ENCODE measurements at regions of chr6 and their contacts with region 1.

Region 1: GRCh38 chr6:110201151-110201884 is 21.1 kb downstream of the CDC40 start:
- DNase-seq: no peak
- ATAC-seq: no peak
- H3K4me3 ChIP-seq: no peak overlapping the region
- H3K4me3 Mint-ChIP-seq: no peak overlapping the region
- H3K27ac ChIP-seq: no peak overlapping the region
- H3K27ac Mint-ChIP-seq: no peak overlapping the region
- H3K4me1 ChIP-seq: no peaks in the 10 kb centered on the region
- H3K4me1 Mint-ChIP-seq: peaks cover 3 to 48% (median 32%) of the 10 kb centered on the region in 7 donors
- H3K27me3 ChIP-seq: no peaks in the 10 kb centered on the region
- H3K27me3 Mint-ChIP-seq: no peaks in the 10 kb centered on the region

Region 2: DNA sequence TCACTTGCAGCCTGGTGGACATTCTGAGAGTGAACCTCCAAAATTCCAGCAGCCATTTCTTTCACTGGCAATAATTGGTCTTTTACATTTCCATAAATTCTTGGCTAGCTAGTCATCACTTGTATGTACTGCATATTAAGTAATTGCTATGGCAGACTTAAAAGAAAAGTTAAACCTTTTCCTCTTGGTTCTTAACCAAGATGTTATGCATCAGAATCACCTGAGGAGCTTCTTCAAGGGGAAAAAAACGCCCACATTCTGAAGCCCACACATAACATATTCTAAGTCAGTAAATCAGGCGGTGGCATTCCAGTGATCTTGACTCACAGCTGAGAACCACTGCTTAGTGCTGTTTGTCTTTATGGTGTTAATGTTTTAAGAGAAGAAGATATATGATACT is 15.9 kb after region 1 on chr6:
- CTCF ChIA-PET with region 1: interaction called, 3 read pairs
- POLR2A ChIA-PET with region 1: no interaction called
- intact Hi-C with region 1: loop called in 1 of 2 experiments (anchors 2 kb)
- DNase-seq: no peak
- ATAC-seq: no peak
- H3K4me3 ChIP-seq: no peak overlapping the region
- H3K4me3 Mint-ChIP-seq: no peak overlapping the region
- H3K27ac ChIP-seq: no peak overlapping the region
- H3K27ac Mint-ChIP-seq: no peak overlapping the region
- H3K4me1 ChIP-seq: no peaks in the 10 kb centered on the region
- H3K4me1 Mint-ChIP-seq: no peaks in the 10 kb centered on the region
- H3K27me3 ChIP-seq: no peaks in the 10 kb centered on the region
- H3K27me3 Mint-ChIP-seq: no peaks in the 10 kb centered on the region